ENCODE measurements at regions of chr10 and their contacts with region 1.

Region 1: DNA sequence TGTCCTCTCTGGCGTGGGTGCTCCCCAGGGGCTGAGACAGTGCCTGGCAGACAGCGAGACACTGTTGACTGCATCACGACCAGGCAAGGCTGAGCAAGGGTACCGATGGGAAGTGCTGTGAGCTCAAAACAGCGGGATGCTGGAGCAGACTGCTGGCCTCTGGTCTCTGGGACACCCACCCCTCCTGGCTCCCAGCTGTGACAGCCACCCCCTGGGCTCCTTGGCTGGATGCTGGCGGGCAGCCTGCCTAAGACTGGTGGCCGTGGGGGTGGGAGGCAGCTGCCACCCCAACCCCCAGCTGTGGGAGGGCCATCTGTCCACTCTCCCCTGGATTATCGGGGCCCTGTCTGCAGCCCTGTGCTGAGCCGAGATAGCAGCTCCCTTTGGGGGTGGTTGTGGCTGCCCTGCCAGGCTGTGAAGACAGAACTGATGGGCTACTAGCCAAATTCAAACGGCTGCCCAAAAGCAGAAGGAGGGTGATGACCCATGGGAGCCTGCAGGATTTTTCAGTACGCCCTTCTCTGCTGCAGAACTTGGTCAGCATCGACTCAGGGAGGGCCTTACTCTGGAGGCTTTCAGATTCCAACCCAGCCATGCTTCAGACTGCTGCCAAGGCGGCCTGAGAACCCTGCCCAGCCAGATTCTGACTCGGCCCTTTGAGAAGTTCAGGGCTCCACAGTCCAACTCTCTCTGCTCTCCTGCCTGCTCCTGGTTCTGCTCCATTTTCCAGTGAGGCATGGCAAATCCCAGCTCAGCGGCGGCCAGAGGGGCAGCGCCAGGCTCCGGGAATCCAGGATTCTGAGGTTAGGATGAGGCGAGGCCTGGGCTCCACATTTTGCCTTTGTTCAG is 125.3 kb downstream of the NEURL1 start:
- DNase-seq: peak; percentile 93

Region 2: GRCh38 chr10:103659674-103660363 is 41.0 kb after region 1 on chr10:
- intact Hi-C with region 1: loop called in 1 of 2 experiments (anchors 10 kb)
- DNase-seq: no peak

Region 3: DNA sequence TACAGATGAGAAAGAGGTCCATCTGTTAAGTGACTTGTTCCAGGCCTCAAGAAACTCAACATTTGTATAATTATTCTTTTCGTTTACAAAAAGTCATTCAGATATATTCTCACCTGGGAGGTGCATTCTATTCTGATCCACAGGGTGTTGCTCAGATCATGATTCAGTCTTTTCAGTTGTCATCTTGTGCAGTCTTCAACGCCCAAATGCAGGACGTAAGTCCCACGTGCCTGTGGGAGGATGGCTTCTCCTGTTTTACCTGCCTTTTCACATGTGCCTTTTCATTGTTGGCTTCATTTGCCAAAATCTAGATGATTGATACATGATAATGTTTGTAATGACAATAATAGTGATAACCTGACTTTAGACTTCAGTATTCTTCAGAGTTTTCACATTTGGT is 394.7 kb after region 1 on chr10:
- intact Hi-C with region 1: no loop called
- DNase-seq: no peak

Measured in posterior vena cava (tissue), 2 donors.